PC-9 (cell line): ENCODE measurements at regions of chr1 and their contacts with region 1.

Region 1: DNA sequence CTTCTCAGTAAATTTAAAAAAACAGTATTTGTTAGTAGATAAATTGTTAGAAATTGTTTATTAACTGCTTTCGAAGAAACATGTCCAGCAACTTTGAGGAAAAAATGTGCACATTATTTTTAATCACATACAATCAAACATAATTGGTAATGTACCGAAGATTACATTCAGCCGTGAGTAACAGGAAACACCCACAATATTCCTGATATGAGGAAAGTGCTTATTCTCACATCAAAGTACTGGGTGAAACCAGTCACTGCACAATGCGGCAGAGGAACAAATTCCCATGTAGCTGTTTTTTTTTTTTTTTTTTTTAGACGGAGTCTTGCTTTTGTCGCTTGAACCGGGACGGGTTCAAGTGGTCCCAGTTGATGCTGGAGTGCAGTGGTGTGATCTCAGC is 9.7 kb downstream of the ACBD3 start:
- DNase-seq: no peak
- H3K4me3 ChIP-seq: no peak overlapping the region
- H3K27ac ChIP-seq: no peak overlapping the region
- H3K4me1 ChIP-seq: no peaks in the 10 kb centered on the region
- H3K27me3 ChIP-seq: no peaks in the 10 kb centered on the region
- CTCF ChIP-seq: no peak

Region 2: GRCh38 chr1:225999227-225999911 is 177.5 kb before region 1 on chr1 and contains the start of gene SDE2:
- CTCF ChIA-PET with region 1: no interaction called
- POLR2A ChIA-PET with region 1: no interaction called
- intact Hi-C with region 1: no loop called
- DNase-seq: peak; percentile 92 to 100
- H3K4me3 ChIP-seq: peak within 1 kb of the TSS; percentile 79
- H3K27ac ChIP-seq: peak within 1 kb of the TSS; percentile 67
- H3K4me1 ChIP-seq: peaks cover 27% of the 10 kb centered on the region
- H3K27me3 ChIP-seq: no peaks in the 10 kb centered on the region
- CTCF ChIP-seq: no peak
- total RNA-seq, gene SDE2: 16.0 and 17.3 TPM in 2 replicates

Region 3: GRCh38 chr1:226446094-226446493 is 269.2 kb after region 1 on chr1:
- CTCF ChIA-PET with region 1: no interaction called
- POLR2A ChIA-PET with region 1: interaction called, 10 read pairs
- intact Hi-C with region 1: no loop called
- DNase-seq: no peak
- H3K4me3 ChIP-seq: no peak overlapping the region
- H3K27ac ChIP-seq: no peak overlapping the region
- H3K4me1 ChIP-seq: no peaks in the 10 kb centered on the region
- H3K27me3 ChIP-seq: peaks cover 15% of the 10 kb centered on the region; the same call in 1 of the 2 replicates
- CTCF ChIP-seq: no peak